Activated naive CD4-positive, alpha-beta T cell treated with anti-CD3 and anti-CD28 coated beads for 36 hours (primary cell): ENCODE measurements at regions of chr1 and their contacts with region 1.

Region 1: GRCh38 chr1:117059678-117060440 is at the start of gene TTF2:
- DNase-seq: peak; percentile 98
- H3K4me3 Mint-ChIP-seq: no peak within 1 kb of the TSS
- H3K27ac Mint-ChIP-seq: no peak within 1 kb of the TSS
- H3K4me1 Mint-ChIP-seq: peaks cover 41% of the 10 kb centered on the region
- H3K27me3 Mint-ChIP-seq: no peaks in the 10 kb centered on the region
- total RNA-seq, gene TTF2: 113 to 122 TPM

Region 2: DNA sequence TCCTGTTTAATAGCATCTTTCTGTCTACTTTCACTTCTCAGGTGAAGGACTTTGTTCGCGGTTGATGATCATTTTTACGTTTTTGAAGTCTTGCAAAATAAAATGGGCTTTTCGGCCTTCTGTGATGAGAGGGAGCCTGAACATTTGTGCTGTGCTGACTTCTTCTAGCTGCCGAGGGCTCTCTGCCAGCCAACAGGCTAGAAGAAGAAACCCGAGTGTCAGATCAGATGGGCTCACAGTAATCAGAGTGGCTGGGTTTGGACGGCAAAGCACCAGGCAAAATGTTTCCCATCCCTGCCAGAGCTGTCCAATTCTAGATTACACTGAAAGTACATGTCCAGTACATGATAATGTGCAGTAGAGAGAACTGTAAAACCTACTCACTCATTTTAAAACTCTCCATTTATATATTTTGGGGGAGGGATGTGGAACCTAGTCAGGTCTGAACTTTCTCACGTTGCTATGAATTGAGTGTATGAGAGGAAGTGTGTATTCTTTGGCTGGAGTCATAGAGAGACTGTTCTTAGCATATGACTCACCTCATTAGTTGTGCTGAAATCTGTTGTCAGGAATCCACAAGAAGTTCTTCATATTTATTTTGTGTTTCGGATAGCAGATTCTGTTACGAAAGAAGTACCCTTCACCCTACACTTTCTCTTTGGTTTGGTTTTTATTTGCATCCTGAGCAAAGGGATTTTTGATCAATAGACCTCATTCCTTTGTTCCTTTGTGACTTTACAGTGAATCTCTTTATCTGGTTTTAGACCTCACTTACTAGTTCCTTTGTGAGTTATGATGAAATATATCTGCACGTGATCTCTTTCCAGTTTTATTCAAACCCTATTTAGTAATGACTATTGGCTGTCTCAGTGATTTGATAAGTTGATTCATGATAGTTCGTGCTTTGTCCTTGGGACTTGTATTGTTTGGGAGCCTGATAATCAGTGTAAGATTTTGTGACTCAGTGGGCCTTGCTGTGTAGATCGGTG is 682.0 kb before region 1 on chr1:
- CTCF ChIA-PET with region 1: no interaction called
- intact Hi-C with region 1: loop called (anchors 1 kb)
- DNase-seq: peak; percentile 47
- H3K4me3 Mint-ChIP-seq: peak overlapping the region; percentile 72
- H3K27ac Mint-ChIP-seq: peak overlapping the region; percentile 95
- H3K4me1 Mint-ChIP-seq: peaks cover 64% of the 10 kb centered on the region
- H3K27me3 Mint-ChIP-seq: no peaks in the 10 kb centered on the region

Region 3: GRCh38 chr1:116628448-116628847 is 431.4 kb before region 1 on chr1:
- CTCF ChIA-PET with region 1: no interaction called
- intact Hi-C with region 1: no loop called
- DNase-seq: peak; percentile 43
- H3K4me3 Mint-ChIP-seq: no peak overlapping the region
- H3K27ac Mint-ChIP-seq: no peak overlapping the region
- H3K4me1 Mint-ChIP-seq: peaks cover 9% of the 10 kb centered on the region
- H3K27me3 Mint-ChIP-seq: peaks cover 4% of the 10 kb centered on the region

Region 4: DNA sequence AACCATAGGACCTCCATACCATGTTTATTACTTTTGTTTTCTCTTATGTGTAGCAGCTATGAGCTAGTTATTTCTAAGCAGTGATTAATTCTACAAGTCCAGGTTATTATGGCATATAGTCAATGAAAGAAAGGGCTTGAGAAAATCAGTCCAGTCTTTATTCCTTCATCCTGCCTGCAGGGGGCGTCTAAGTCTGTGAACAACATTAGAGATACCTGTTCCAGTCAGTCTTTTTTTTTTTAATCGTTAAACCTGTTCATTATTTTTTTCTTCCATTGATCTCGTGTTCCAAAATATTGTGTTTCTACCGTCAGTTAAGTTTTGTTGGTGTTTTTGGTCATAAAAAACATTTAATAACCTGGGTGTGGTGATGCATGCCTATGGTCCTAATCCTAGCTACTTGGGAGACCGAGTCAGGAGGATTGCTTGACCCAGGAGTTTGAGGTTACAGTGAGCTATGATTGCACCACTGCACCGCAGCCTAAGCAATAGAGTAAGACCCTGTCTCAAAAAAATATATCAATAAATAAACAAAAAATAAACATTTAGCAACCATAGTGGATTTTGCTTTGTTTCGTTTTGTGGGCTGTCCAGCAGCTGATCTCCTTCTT is 335.0 kb before region 1 on chr1:
- CTCF ChIA-PET with region 1: interaction called, 15 read pairs
- intact Hi-C with region 1: loop called (anchors 1 kb)
- DNase-seq: peak; percentile 94
- H3K4me3 Mint-ChIP-seq: no peak overlapping the region
- H3K27ac Mint-ChIP-seq: no peak overlapping the region
- H3K4me1 Mint-ChIP-seq: peaks cover 26% of the 10 kb centered on the region
- H3K27me3 Mint-ChIP-seq: no peaks in the 10 kb centered on the region

Region 5: GRCh38 chr1:116769561-116769977 is 290.3 kb before region 1 on chr1:
- CTCF ChIA-PET with region 1: interaction called, 8 read pairs
- intact Hi-C with region 1: loop called (anchors 1 kb)
- DNase-seq: peak; percentile 88
- H3K4me3 Mint-ChIP-seq: peak overlapping the region; percentile 100
- H3K27ac Mint-ChIP-seq: peak overlapping the region; percentile 100
- H3K4me1 Mint-ChIP-seq: peaks cover 90% of the 10 kb centered on the region
- H3K27me3 Mint-ChIP-seq: no peaks in the 10 kb centered on the region

Region 6: GRCh38 chr1:116853670-116854402 is 206.0 kb before region 1 on chr1:
- CTCF ChIA-PET with region 1: interaction called, 8 read pairs
- intact Hi-C with region 1: loop called (anchors 1 kb)
- DNase-seq: peak; percentile 45
- H3K4me3 Mint-ChIP-seq: no peak overlapping the region
- H3K27ac Mint-ChIP-seq: peak overlapping the region; percentile 60
- H3K4me1 Mint-ChIP-seq: peaks cover 36% of the 10 kb centered on the region
- H3K27me3 Mint-ChIP-seq: no peaks in the 10 kb centered on the region

Region 7: GRCh38 chr1:117093870-117094621 is 34.2 kb after region 1 on chr1:
- CTCF ChIA-PET with region 1: interaction called, 12 read pairs
- intact Hi-C with region 1: loop called (anchors 1 kb)
- DNase-seq: peak; percentile 68
- H3K4me3 Mint-ChIP-seq: no peak overlapping the region
- H3K27ac Mint-ChIP-seq: no peak overlapping the region
- H3K4me1 Mint-ChIP-seq: peaks cover 20% of the 10 kb centered on the region
- H3K27me3 Mint-ChIP-seq: no peaks in the 10 kb centered on the region

Region 8: DNA sequence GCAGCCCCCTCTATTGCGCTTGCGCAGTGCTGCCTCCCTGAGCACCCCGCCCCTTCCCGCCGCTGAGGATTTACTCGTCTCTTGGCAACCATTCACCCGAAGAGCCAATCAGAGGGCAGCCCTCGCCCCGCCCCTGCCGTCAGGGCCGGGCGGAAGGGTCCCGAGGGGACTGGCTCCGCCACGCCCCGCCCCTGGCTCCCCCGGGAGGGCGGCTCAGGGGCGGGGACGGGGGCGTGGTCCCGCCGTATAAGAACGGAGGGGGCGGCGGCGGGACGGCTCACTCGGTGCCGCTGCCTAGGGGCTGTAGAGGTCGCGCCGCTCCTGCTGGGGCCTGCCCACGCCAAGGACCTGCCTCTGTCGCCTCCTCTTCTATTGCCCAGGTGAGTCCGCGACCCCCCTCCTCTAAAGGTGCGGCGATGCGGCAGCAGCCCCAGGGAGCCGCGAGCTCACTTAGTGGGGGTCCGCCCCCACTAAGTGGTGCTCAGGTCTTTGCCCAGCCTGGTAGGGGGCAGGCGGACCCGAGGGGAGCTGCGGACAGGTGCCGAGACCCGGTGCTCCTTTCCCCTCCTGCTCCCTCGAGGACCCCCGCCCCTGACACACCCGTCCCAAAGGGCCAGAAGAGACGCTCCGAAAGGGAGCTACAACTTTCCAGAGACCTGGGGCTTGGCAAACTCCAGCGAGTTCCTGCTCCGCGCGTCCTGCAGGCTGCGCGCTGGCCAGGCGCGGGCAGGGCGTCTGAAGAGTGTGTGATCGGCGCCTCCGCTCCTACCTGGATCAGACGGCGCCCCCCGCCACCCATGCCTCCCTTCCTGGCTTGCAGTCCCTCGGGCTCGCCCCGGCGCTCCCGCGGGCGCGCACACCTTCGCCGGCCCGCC is 546.2 kb after region 1 on chr1 and contains the start of gene TENT5C:
- CTCF ChIA-PET with region 1: no interaction called
- intact Hi-C with region 1: loop called (anchors 2 kb)
- DNase-seq: peak; percentile 98
- H3K4me3 Mint-ChIP-seq: peak within 1 kb of the TSS; percentile 86
- H3K27ac Mint-ChIP-seq: peak within 1 kb of the TSS; percentile 78
- H3K4me1 Mint-ChIP-seq: peaks cover 22% of the 10 kb centered on the region
- H3K27me3 Mint-ChIP-seq: peaks cover 2% of the 10 kb centered on the region
- total RNA-seq, gene TENT5C: 10.7 to 11.2 TPM